ENCODE measurements at regions of chr2 and their contacts with region 1.

Region 1: GRCh38 chr2:128027801-128028667 is at the start of gene SAP130:
- DNase-seq: peak; percentile 98
- H3K4me3 ChIP-seq: peak within 1 kb of the TSS; percentile 98 to 100
- H3K27ac ChIP-seq: peak within 1 kb of the TSS; percentile 98 to 99
- H3K4me1 ChIP-seq: no peaks in the 10 kb centered on the region
- H3K27me3 ChIP-seq: no peaks in the 10 kb centered on the region
- CTCF ChIP-seq: peak in 1 of 4 experiments; percentile 7
- POLR2A ChIP-seq: peak; percentile 60
- total RNA-seq, gene SAP130: 21.9 to 55.4 TPM

Region 2: DNA sequence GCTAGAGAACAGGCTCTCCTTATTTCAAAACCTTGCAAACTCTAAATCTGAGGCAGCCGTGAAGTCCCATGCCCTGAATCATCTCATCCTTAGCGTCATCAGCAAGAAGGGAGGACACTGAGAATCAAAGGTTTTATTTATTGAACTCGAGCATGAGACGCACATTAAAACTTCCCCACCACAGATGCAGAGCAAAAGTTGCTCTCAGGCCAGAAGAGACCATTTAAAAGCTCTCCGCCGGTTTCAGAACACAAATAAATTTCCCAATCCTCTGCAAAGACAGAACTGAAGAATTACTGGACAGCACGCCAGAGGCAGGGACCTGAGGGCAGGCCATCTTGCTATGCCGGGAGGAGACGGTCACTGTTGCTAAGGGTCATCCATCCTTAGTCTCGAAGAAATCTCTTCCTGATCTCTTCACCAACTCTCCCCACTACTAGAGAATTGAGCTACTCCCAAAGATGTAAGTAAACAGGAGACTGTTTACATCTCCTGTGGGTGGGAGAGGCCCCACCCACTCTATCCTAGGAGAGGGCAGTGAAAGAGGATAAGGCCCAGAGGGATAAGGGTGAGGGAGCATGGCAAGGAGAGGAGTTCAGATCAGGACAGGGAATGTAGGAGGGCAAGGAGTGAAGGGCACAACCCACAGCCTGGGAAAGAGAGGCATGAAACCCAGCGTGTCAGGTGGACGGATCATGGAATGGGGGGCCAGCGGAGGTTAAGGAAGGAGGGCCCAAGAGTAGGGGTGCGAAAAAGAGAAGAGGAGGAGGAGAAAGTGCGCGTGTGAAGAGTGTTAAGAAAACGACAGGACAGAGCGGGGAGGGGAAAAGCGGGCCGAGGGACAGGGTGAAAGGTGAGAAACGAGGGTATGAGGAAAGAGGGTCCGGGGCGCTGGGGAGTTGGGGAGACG is 143.3 kb before region 1 on chr2:
- intact Hi-C with region 1: loop called (anchors 5 kb)
- DNase-seq: no peak
- H3K4me3 ChIP-seq: peak overlapping the region; percentile 42 to 58
- H3K27ac ChIP-seq: peak overlapping the region; percentile 78 to 90
- H3K4me1 ChIP-seq: peaks cover 3% of the 10 kb centered on the region
- H3K27me3 ChIP-seq: no peaks in the 10 kb centered on the region
- CTCF ChIP-seq: no peak
- POLR2A ChIP-seq: no peak

Region 3: GRCh38 chr2:128076461-128077106 is 48.5 kb after region 1 on chr2:
- intact Hi-C with region 1: no loop called
- DNase-seq: no peak
- H3K4me3 ChIP-seq: no peak overlapping the region
- H3K27ac ChIP-seq: no peak overlapping the region
- H3K4me1 ChIP-seq: no peaks in the 10 kb centered on the region
- H3K27me3 ChIP-seq: no peaks in the 10 kb centered on the region
- CTCF ChIP-seq: no peak
- POLR2A ChIP-seq: no peak

Region 4: DNA sequence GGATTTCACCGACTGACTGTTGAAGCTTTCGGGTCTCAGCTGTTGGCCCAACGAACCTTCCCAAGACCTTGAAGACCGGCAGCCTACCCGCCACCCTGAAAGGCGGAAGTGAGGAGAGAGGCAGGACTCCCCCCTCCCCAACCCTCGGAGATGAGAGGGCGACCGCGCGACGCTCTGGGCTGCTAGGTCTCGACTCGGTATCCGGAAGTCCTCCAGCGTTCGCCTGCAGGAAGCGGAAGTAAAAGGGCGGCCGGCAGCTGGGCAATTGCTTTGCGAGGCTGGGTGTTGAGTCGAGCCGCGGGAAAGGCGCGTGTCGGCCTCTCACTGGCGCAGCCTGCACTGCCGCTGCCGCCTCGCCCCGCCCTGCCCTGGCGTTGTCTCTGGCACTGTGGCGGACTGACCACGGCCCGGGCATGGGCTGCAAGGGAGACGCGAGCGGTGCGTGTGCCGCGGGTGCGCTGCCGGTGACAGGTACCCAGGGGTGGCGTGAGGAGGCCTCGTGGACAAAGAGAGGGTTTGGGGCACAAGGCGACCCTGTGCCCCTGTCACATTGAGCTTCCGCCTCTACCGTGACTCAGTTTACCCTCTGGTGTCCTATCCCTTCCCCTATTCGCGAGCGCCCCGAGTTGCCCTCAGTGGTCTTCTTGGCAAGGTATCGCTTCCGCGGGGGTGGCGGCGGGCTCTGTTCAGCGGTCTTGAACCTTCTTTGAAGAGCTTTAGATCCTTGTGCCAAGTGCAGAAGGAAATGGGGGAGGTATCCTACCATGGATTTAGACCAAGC is 63.1 kb after region 1 on chr2 and contains the start of gene UGGT1:
- intact Hi-C with region 1: loop called (anchors 1 kb)
- DNase-seq: peak; percentile 89
- H3K4me3 ChIP-seq: peak within 1 kb of the TSS; percentile 85 to 91
- H3K27ac ChIP-seq: peak within 1 kb of the TSS; percentile 70 to 81
- H3K4me1 ChIP-seq: peaks cover 6% of the 10 kb centered on the region
- H3K27me3 ChIP-seq: no peaks in the 10 kb centered on the region
- CTCF ChIP-seq: peak in 1 of 4 experiments; percentile 21
- POLR2A ChIP-seq: peak; percentile 56
- total RNA-seq, gene UGGT1: 34.7 to 45.2 TPM

Measured in prostate gland (tissue), 2 donors.